ENCODE measurements at regions of chr6 and their contacts with region 1.

Region 1: GRCh38 chr6:119449331-119450156 is 100.0 kb upstream of the MAN1A1 start:
- DNase-seq: no peak

Region 2: DNA sequence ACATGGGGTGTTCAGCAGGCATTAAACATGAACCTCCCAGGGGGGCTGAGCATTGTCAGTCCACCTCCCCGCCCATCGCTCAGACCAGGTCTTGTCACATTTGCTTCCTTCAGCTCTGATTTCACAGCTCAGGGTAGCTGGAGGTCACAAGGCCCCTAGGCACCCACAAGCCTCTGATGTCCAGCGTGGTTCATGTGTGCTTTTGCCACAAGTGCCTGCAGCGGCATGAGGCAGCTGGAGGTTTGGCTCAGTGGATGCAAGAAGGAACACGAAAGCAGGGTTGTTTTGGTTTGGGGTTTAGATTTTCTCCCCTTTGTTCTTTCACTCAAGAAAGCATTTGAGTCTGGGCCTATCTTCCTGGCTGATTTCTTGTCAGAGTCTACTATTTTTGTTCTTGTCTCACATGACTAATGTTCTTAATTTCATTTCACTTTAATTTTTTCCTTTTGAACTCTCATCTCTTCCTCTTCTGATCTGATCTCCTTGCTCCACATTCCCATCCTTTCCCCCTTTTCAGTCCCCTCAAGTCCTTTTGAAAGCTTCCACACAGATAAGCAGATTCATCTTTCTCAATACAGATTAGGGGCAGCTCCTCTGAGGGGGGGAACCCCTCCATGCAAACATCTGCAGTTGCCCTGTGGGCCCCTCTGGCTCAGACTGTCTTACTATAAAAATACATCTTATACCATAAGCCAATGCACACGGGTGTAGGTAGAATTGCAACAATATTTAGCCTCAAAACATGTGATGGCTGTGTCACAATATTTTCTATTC is 730.0 kb before region 1 on chr6:
- intact Hi-C with region 1: loop called in 1 of 2 experiments (anchors 5 kb)
- DNase-seq: no peak

Region 3: DNA sequence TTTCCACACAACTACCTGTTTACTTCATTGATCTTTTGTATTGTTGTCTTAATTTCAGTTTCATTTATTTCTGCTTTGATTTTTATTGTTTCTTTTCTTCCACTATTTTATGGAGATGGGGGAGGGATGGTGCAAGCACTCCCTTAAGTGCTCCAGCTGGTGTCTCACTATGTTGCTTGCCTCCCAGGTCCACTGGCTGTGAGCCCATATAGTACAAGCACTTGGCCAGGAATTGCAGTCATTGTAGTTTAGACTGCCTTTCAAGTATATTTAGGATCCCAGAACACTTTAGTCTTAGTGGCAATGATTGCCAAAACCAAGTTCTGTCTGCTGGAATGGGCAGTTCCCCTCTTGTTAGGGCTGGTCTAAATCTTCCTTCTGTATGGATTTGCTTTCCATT is 65.1 kb before region 1 on chr6:
- intact Hi-C with region 1: no loop called
- DNase-seq: no peak

Measured in posterior vena cava (tissue), 2 donors.